ENCODE measurements at regions of chr9 and their contacts with region 1.

Region 1: DNA sequence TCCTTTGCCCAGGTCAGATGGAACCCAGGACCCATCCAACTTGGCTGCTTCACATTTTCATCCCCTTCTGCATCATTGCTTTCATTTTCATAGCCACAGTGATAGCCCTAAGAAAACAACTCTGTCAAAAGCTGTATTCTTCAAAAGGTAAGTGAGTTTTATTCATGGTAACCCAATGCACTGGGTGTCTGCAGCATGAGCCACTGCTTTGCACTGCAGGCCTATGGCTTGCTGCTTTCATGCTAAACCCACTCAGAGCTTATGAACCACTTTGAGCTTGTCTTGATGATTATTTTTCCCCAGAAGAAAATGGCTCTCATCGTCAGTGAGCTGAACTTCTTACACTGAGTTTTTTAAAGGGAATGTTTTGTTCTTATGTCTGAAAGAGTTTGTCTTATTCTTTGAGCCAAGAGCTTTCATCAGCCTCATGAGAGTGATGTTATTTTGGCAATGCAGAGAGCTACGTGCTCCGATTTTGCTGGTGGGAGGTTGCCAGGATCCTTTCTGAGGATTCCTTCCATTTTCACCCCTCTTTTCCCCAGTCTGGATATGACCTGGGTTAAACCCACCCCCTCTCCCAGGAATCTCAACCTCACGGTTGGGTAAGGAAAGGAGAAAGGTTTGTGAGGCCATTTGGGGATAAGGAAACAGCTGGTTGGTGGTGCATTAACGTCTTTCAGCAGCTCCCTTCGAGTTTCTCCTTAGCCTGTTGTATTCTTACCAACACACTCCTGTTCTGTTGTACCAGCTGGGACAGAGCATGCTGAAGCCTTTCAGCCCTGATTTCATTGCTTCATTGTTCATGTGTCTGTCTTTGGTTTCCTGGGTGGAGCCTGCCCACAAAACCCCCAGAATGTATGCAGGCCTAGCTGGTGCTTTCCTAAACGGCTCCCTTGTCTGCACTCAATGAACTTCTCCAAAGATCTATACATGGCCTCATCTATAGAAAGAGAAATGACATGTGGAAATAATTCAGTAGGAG is 47.6 kb downstream of the PDCD1LG2 start:
- DNase-seq: no peak
- ATAC-seq: peak; percentile 88
- H3K4me3 ChIP-seq: no peak overlapping the region
- H3K27ac ChIP-seq: peak overlapping the region; percentile 66
- H3K4me1 ChIP-seq: peaks cover 27% of the 10 kb centered on the region
- H3K27me3 ChIP-seq: no peaks in the 10 kb centered on the region
- CTCF ChIP-seq: no peak
- EP300 ChIP-seq: no peak
- POLR2A ChIP-seq: no peak
- RAD21 ChIP-seq: no peak

Region 2: DNA sequence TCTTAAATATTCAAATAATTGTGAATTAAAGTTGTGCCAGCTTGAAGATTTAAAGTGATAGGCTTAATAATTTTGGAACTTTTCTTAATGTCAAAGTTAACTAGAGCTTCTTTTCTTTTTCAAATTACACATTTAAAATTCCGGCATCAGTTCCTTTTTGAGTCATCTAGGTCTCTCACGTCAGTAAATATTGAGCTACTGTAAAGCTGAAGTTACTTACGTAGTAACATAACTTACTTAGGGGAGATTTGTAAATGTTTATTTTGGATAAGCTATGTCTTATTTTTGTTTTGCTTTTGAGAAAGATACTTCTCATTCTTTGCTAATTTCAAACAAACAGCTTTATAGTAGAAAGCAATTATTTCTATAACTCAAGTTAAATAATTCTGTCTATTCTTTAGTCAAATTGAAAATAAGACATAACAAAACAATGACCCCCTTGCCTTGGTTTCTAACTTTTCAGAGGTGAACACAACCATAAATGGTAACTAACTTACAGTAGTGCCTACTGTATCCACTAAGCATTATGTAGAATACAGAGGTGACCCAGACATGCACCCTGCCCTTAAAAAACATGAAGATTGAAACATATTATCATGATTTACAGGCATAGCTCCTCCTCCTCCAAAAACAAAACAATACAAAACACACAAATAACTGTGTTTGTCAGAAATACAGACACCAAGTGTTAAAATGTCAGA is 77.8 kb before region 1 on chr9:
- CTCF ChIA-PET with region 1: no interaction called
- POLR2A ChIA-PET with region 1: interaction called, 3 read pairs
- RAD21 ChIA-PET with region 1: interaction called, 4 read pairs
- SMC1A ChIA-PET with region 1: interaction called, 10 read pairs
- in situ Hi-C with region 1: no loop called
- intact Hi-C with region 1: no loop called
- DNase-seq: no peak
- ATAC-seq: peak; percentile 85
- H3K4me3 ChIP-seq: no peak overlapping the region
- H3K27ac ChIP-seq: peak overlapping the region; percentile 62
- H3K4me1 ChIP-seq: peaks cover 27% of the 10 kb centered on the region
- H3K27me3 ChIP-seq: no peaks in the 10 kb centered on the region
- CTCF ChIP-seq: no peak
- EP300 ChIP-seq: peak; percentile 37 to 47; a peak in 2 of 4 replicates
- POLR2A ChIP-seq: no peak
- RAD21 ChIP-seq: no peak

Region 3: GRCh38 chr9:5524090-5524489 is 33.8 kb before region 1 on chr9:
- CTCF ChIA-PET with region 1: interaction called, 6 read pairs
- POLR2A ChIA-PET with region 1: interaction called, 12 read pairs
- RAD21 ChIA-PET with region 1: interaction called, 6 read pairs
- SMC1A ChIA-PET with region 1: interaction called, 58 read pairs
- in situ Hi-C with region 1: no loop called
- intact Hi-C with region 1: no loop called
- DNase-seq: no peak
- ATAC-seq: no peak
- H3K4me3 ChIP-seq: no peak overlapping the region
- H3K27ac ChIP-seq: no peak overlapping the region
- H3K4me1 ChIP-seq: peaks cover 18% of the 10 kb centered on the region
- H3K27me3 ChIP-seq: no peaks in the 10 kb centered on the region
- CTCF ChIP-seq: no peak
- EP300 ChIP-seq: no peak
- POLR2A ChIP-seq: no peak
- RAD21 ChIP-seq: no peak

Region 4: DNA sequence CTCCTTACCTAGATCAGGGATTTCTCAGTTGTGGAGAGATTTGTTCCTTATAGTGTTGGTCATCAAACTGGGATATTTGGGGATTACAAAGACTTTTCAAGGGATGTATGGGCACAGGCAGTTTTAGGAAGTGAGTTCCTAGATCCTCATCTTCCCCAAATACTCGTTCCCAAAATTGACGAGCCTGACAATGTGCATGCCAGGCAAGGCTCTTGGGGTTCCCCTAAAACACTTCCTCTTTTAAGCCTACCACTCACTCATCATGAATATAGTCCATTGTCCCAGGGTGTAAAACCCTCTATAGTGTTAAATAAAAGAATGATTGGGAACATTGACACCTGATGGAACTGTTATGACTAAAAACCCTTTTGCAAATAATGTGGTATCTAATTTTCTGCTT is 21.2 kb before region 1 on chr9:
- CTCF ChIA-PET with region 1: interaction called, 7 read pairs
- POLR2A ChIA-PET with region 1: interaction called, 23 read pairs
- RAD21 ChIA-PET with region 1: interaction called, 11 read pairs
- SMC1A ChIA-PET with region 1: interaction called, 58 read pairs
- in situ Hi-C with region 1: no loop called
- intact Hi-C with region 1: no loop called
- DNase-seq: no peak
- ATAC-seq: peak; percentile 86
- H3K4me3 ChIP-seq: no peak overlapping the region
- H3K27ac ChIP-seq: peak overlapping the region; percentile 38; the same call in 1 of the 2 replicates
- H3K4me1 ChIP-seq: peaks cover 29% of the 10 kb centered on the region
- H3K27me3 ChIP-seq: no peaks in the 10 kb centered on the region
- CTCF ChIP-seq: no peak
- EP300 ChIP-seq: peak in 1 of 2 experiments; percentile 41; a peak in 1 of 4 replicates
- POLR2A ChIP-seq: no peak
- RAD21 ChIP-seq: no peak

Region 5: DNA sequence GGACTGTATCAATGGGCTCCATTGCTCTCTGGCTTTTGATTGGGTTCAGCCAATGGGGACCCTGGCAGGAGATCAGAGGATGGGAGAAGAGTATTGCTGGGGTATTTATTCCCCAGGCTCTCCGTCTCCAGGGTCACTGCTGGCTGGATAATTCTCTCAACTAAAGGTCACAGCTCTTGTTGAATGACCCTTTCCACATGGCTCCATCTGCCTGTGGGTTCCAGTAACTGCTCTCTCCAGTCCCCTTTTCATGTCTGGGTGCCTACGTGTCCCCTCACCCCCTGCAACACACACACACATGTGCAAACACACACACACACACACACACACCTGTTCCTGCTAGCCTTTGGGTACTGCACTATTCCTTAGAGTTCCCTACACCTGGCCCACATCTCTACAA is 17.1 kb after region 1 on chr9:
- CTCF ChIA-PET with region 1: interaction called, 7 read pairs
- POLR2A ChIA-PET with region 1: interaction called, 5 read pairs
- RAD21 ChIA-PET with region 1: interaction called, 9 read pairs
- SMC1A ChIA-PET with region 1: interaction called, 20 read pairs
- in situ Hi-C with region 1: no loop called
- intact Hi-C with region 1: no loop called
- DNase-seq: no peak
- ATAC-seq: no peak
- H3K4me3 ChIP-seq: no peak overlapping the region
- H3K27ac ChIP-seq: no peak overlapping the region
- H3K4me1 ChIP-seq: peaks cover 6% of the 10 kb centered on the region
- H3K27me3 ChIP-seq: no peaks in the 10 kb centered on the region
- CTCF ChIP-seq: peak in 2 of 3 experiments; percentile 23 to 25; a peak in 2 of 6 replicates
- EP300 ChIP-seq: no peak
- POLR2A ChIP-seq: no peak
- RAD21 ChIP-seq: peak; percentile 41; the same call in 1 of the 2 replicates